ENCODE measurements at regions of chr3 and their contacts with region 1.

Region 1: GRCh38 chr3:65060904-65061303 is 373.1 kb upstream of the ADAMTS9 start:
- DNase-seq: no peak
- H3K4me3 ChIP-seq: no peak overlapping the region
- H3K27ac ChIP-seq: no peak overlapping the region
- H3K4me1 ChIP-seq: no peaks in the 10 kb centered on the region
- H3K27me3 ChIP-seq: no peaks in the 10 kb centered on the region
- CTCF ChIP-seq: peak in 1 of 3 experiments; percentile 32; a peak in 1 of 4 replicates
- EP300 ChIP-seq: no peak
- POLR2A ChIP-seq: no peak
- RAD21 ChIP-seq: peak; percentile 17 to 27; a peak in 3 of 4 replicates

Region 2: GRCh38 chr3:65048151-65048550 is 12.8 kb before region 1 on chr3:
- CTCF ChIA-PET with region 1: interaction called, 11 read pairs
- POLR2A ChIA-PET with region 1: no interaction called
- DNase-seq: no peak
- H3K4me3 ChIP-seq: no peak overlapping the region
- H3K27ac ChIP-seq: no peak overlapping the region
- H3K4me1 ChIP-seq: no peaks in the 10 kb centered on the region
- H3K27me3 ChIP-seq: no peaks in the 10 kb centered on the region
- CTCF ChIP-seq: no peak
- EP300 ChIP-seq: no peak
- POLR2A ChIP-seq: no peak
- RAD21 ChIP-seq: no peak

Measured in H1 (cell line).